ENCODE measurements at regions of chr5 and their contacts with region 1.

Region 1: DNA sequence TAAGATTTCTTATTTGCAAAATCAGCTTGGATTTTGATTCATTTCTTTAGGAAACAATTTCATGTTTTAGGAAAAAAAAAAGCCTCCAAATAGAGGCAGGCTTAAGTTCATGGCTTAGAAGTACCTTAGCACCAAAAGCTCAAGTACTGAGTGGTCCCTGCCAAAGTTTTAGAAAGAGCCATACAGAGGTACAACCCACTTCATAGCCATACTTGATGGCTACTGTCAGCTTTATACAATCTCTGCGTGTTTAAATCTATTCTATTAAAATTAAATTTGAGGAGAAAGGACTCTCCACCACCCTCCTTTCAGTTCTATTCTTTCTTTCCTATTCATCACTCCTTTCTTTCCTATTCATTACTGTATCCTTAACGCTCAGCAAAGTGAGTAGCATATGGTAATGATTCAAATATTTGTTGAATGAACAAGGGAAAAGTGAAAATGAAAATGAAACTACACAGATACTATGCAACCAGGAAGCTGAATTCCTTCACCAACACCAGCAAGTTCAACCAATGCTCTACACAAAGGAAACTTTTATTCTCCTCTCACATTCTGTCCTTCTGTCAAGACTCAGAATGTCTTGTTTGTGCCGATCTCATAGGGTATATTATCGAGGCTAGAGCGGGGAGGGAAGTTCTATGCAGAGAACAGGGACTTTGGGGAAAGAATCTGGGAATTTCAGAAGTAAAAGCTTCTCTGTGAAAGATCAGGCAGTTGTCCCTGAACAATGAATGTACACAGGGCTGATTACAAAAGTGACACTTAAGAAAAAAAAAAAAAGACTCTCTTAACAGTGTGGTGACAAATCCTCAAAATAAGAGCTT is 138.6 kb upstream of the SPEF2 start:
- DNase-seq: peak; percentile 43
- H3K4me3 ChIP-seq: peak overlapping the region in 2 of 3 experiments; percentile 15 to 34
- H3K27ac ChIP-seq: no peak overlapping the region
- H3K4me1 ChIP-seq: no peaks in the 10 kb centered on the region
- H3K27me3 ChIP-seq: no peaks in the 10 kb centered on the region
- CTCF ChIP-seq: no peak

Region 2: GRCh38 chr5:35444196-35444595 is 34.9 kb before region 1 on chr5:
- CTCF ChIA-PET with region 1: no interaction called
- dilution Hi-C with region 1: loop called (anchors 5 kb)
- in situ Hi-C with region 1: no loop called
- intact Hi-C with region 1: no loop called
- DNase-seq: no peak
- H3K4me3 ChIP-seq: no peak overlapping the region
- H3K27ac ChIP-seq: no peak overlapping the region
- H3K4me1 ChIP-seq: no peaks in the 10 kb centered on the region
- H3K27me3 ChIP-seq: no peaks in the 10 kb centered on the region
- CTCF ChIP-seq: no peak

Measured in mammary epithelial cell (primary cell).